Activated B cell treated with CpG ODN at 0.5 μM for 24 hours (primary cell): ENCODE measurements at regions of chr4 and their contacts with region 1.

Region 1: DNA sequence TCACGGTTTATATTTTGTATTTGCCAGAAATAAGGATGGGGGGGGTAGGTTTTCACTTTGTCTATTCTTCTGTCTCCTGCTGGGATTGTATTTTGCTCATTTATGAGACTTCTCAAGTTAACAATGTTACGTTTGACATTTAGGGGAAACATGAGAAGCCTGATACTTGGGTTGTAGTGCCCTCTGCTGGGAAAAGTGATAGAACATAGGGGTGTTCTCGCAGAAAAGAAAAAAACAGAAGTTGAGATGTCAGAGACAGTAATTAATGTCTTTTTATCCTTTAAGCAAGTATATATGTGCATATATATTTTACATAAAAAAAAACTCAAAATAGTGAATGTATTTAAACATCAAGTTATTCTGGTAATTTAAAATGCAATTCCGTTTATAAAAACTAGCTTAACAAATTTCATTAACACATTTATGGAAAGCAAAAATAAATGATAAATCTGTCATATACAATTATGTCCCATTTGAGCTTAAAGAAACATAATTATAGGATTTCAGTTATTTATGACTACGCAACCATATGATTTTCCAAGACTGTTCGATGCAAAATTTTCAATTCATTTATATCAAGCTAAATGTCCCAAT is 46.0 kb upstream of the TMPRSS11F start:
- DNase-seq: no peak
- ATAC-seq: peak; percentile 45
- H3K4me3 Mint-ChIP-seq: no peak overlapping the region
- H3K27ac Mint-ChIP-seq: no peak overlapping the region
- H3K4me1 Mint-ChIP-seq: no peaks in the 10 kb centered on the region
- H3K27me3 Mint-ChIP-seq: no peaks in the 10 kb centered on the region
- CTCF ChIP-seq: no peak

Region 2: GRCh38 chr4:67393699-67394281 is 781.9 kb before region 1 on chr4:
- CTCF ChIA-PET with region 1: no interaction called
- POLR2A ChIA-PET with region 1: no interaction called
- intact Hi-C with region 1: loop called (anchors 2 kb)
- DNase-seq: no peak
- ATAC-seq: no peak
- H3K4me3 Mint-ChIP-seq: no peak overlapping the region
- H3K27ac Mint-ChIP-seq: no peak overlapping the region
- H3K4me1 Mint-ChIP-seq: no peaks in the 10 kb centered on the region
- H3K27me3 Mint-ChIP-seq: peaks cover 2% of the 10 kb centered on the region
- CTCF ChIP-seq: peak; percentile 98

Region 3: DNA sequence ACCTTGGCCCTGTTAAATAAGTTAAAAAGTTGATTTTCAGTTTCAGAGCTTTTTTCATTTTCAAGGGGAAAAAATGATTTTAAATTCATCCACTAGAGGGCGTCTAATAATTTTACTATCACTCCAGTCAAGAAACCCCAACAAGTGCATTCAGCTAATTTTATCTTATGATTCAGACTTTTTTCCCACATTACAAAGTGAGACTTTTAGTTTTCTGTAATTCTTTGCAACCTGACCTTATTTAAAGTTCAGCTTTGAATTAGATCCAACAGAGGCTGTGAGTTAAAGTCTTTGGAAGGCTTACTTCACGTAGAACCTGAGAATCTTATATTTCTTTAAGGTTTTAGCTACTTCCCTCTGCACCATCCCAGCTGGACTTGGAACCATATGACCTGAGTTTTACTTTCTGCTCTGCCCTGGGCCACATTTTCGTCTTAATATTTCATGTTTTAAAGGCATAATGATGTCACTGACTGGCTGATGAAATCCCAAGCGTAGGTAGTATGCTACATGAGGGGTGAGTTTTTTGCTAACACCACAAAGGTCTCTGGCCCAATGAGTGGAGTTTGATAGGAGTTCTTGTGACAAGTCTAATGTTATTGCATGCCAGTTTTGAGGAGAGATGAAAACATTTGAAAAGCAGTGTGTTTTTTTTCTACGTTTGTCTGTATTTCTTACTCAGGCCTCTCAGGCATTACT is 428.7 kb before region 1 on chr4:
- CTCF ChIA-PET with region 1: no interaction called
- POLR2A ChIA-PET with region 1: no interaction called
- intact Hi-C with region 1: loop called (anchors 1 kb)
- DNase-seq: no peak
- ATAC-seq: no peak
- H3K4me3 Mint-ChIP-seq: no peak overlapping the region
- H3K27ac Mint-ChIP-seq: no peak overlapping the region
- H3K4me1 Mint-ChIP-seq: peaks cover 5% of the 10 kb centered on the region
- H3K27me3 Mint-ChIP-seq: no peaks in the 10 kb centered on the region
- CTCF ChIP-seq: no peak

Region 4: GRCh38 chr4:67871867-67872266 is 303.8 kb before region 1 on chr4:
- CTCF ChIA-PET with region 1: no interaction called
- POLR2A ChIA-PET with region 1: no interaction called
- intact Hi-C with region 1: loop called (anchors 5 kb)
- DNase-seq: no peak
- ATAC-seq: no peak
- H3K4me3 Mint-ChIP-seq: no peak overlapping the region
- H3K27ac Mint-ChIP-seq: no peak overlapping the region
- H3K4me1 Mint-ChIP-seq: no peaks in the 10 kb centered on the region
- H3K27me3 Mint-ChIP-seq: no peaks in the 10 kb centered on the region
- CTCF ChIP-seq: no peak

Region 5: DNA sequence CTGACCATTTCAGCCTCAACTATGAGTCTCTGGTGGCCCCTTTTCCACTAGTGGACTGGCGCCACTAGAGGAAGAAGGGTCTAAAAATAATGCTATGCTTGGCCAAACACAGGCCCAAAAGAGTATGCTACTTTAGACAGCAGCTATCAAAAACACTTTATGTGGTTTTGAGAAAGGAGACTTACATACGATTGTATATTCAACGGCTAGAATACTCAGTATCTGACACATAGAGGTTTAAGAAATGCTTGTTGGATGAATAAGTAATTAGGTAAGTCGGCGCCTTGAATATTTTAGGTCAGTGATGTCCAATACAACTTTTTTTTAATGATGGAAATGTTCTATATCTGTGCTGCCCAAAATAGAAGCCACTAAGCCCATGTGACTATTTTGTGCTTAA is 186.7 kb before region 1 on chr4:
- CTCF ChIA-PET with region 1: interaction called, 3 read pairs
- POLR2A ChIA-PET with region 1: no interaction called
- intact Hi-C with region 1: loop called (anchors 1 kb)
- DNase-seq: no peak
- ATAC-seq: no peak
- H3K4me3 Mint-ChIP-seq: no peak overlapping the region
- H3K27ac Mint-ChIP-seq: no peak overlapping the region
- H3K4me1 Mint-ChIP-seq: no peaks in the 10 kb centered on the region
- H3K27me3 Mint-ChIP-seq: peaks cover 2% of the 10 kb centered on the region
- CTCF ChIP-seq: no peak

Region 6: GRCh38 chr4:68288393-68288740 is 112.7 kb after region 1 on chr4:
- CTCF ChIA-PET with region 1: no interaction called
- POLR2A ChIA-PET with region 1: no interaction called
- intact Hi-C with region 1: no loop called
- DNase-seq: no peak
- ATAC-seq: no peak
- H3K4me3 Mint-ChIP-seq: no peak overlapping the region
- H3K27ac Mint-ChIP-seq: no peak overlapping the region
- H3K4me1 Mint-ChIP-seq: no peaks in the 10 kb centered on the region
- H3K27me3 Mint-ChIP-seq: peaks cover 12% of the 10 kb centered on the region
- CTCF ChIP-seq: no peak